ENCODE measurements at regions of chr14 and their contacts with region 1.

Region 1: GRCh38 chr14:81164167-81164774 is 56.5 kb downstream of the GTF2A1 start:
- DNase-seq: peak; percentile 47
- ATAC-seq: peak; percentile 73
- H3K4me3 ChIP-seq: no peak overlapping the region
- H3K27ac ChIP-seq: no peak overlapping the region
- H3K4me1 ChIP-seq: no peaks in the 10 kb centered on the region
- H3K27me3 ChIP-seq: no peaks in the 10 kb centered on the region
- CTCF ChIP-seq: peak; percentile 60

Region 2: GRCh38 chr14:80996049-80996901 is 168.0 kb before region 1 on chr14:
- CTCF ChIA-PET with region 1: no interaction called
- POLR2A ChIA-PET with region 1: no interaction called
- in situ Hi-C with region 1: no loop called
- intact Hi-C with region 1: loop called (anchors 5 kb)
- DNase-seq: peak; percentile 12
- ATAC-seq: peak; percentile 86
- H3K4me3 ChIP-seq: no peak overlapping the region
- H3K27ac ChIP-seq: no peak overlapping the region
- H3K4me1 ChIP-seq: no peaks in the 10 kb centered on the region
- H3K27me3 ChIP-seq: peaks cover 4% of the 10 kb centered on the region
- CTCF ChIP-seq: peak; percentile 64

Region 3: GRCh38 chr14:81085596-81085995 is 78.7 kb before region 1 on chr14:
- CTCF ChIA-PET with region 1: no interaction called
- POLR2A ChIA-PET with region 1: no interaction called
- in situ Hi-C with region 1: no loop called
- intact Hi-C with region 1: no loop called
- DNase-seq: no peak
- ATAC-seq: no peak
- H3K4me3 ChIP-seq: no peak overlapping the region
- H3K27ac ChIP-seq: no peak overlapping the region
- H3K4me1 ChIP-seq: no peaks in the 10 kb centered on the region
- H3K27me3 ChIP-seq: no peaks in the 10 kb centered on the region
- CTCF ChIP-seq: no peak